Activated naive CD4-positive, alpha-beta T cell treated with anti-CD3 and anti-CD28 coated beads for 36 hours (primary cell): ENCODE measurements at regions of chr2 and their contacts with region 1.

Region 1: DNA sequence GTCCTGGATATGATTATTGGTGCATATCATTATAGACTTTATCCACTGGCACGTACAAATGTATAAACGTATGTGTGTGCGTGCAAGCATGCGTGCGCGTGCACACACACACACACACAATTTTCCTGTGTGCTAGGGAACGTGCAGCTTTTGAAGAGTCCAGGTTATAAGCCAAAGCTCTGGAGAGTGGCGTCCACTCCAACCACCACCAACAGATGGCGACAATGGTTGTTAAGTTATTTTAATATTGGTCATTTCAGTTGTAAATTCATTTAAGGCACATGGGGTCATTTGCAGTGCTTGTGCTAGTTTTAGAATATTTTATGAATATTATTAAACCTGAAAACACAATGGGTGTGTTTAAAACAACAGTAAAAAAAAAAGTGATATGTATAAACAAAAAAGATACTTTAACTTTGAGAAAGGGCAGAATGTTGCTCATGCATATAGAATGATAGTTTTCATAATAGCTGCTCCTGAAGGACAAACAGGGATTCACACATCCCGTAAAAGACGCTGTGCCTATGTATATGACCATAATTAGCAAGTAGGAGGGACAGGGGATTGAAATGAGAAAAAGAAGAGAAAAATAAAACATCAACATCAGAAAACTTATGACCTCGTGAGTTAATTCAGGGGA is 124.2 kb upstream of the ITGB6 start:
- DNase-seq: peak; percentile 69
- H3K4me3 Mint-ChIP-seq: no peak overlapping the region
- H3K27ac Mint-ChIP-seq: no peak overlapping the region
- H3K4me1 Mint-ChIP-seq: peaks cover 78% of the 10 kb centered on the region
- H3K27me3 Mint-ChIP-seq: no peaks in the 10 kb centered on the region

Region 2: GRCh38 chr2:160109936-160110673 is 214.2 kb before region 1 on chr2:
- CTCF ChIA-PET with region 1: interaction called, 14 read pairs
- intact Hi-C with region 1: loop called (anchors 2 kb)
- DNase-seq: peak; percentile 74
- H3K4me3 Mint-ChIP-seq: no peak overlapping the region
- H3K27ac Mint-ChIP-seq: no peak overlapping the region
- H3K4me1 Mint-ChIP-seq: no peaks in the 10 kb centered on the region
- H3K27me3 Mint-ChIP-seq: peaks cover 10% of the 10 kb centered on the region

Region 3: DNA sequence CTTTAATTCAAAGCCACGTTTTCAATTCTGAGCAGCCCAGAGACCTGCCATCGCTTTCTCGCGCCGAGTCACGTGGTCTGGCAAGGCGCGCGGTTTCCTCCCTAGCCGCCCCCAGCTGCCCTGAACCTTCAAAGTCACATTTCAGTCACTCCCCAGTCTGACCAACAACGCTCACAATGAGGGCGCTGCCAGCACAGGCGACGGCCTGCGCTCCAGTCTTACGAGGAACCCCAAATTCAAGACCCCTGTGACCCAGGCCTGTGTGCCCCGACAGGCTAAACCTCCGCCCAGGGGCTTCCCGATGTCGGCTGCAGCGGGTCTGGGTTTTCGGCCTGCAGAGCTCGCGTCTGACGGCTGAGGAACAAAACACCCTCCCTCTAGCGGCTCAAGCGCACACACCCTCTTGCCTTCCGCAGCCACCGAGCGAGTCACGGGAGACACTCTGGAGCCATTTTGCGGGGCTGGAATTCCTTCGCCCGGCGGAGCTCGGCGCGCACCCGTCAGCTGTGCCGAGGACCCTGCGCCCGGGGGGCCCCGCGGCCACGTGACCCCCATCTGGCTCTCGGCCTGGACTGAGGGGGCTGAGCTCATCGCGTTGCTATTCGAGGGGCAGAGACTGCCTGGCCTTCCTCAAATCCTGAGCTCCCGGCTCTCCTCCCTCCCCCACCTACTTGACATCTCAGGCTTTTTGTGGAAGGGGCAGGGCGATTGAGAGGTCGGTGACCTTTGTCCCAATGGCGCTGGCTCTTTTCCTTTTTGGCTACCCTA is 54.3 kb before region 1 on chr2:
- CTCF ChIA-PET with region 1: interaction called, 6 read pairs
- intact Hi-C with region 1: loop called (anchors 1 kb)
- DNase-seq: peak; percentile 64
- H3K4me3 Mint-ChIP-seq: peak overlapping the region; percentile 65
- H3K27ac Mint-ChIP-seq: peak overlapping the region; percentile 53
- H3K4me1 Mint-ChIP-seq: peaks cover 39% of the 10 kb centered on the region
- H3K27me3 Mint-ChIP-seq: no peaks in the 10 kb centered on the region

Region 4: GRCh38 chr2:160301420-160301819 is 22.9 kb before region 1 on chr2:
- CTCF ChIA-PET with region 1: interaction called, 5 read pairs
- intact Hi-C with region 1: loop called (anchors 1 kb)
- DNase-seq: peak; percentile 73
- H3K4me3 Mint-ChIP-seq: no peak overlapping the region
- H3K27ac Mint-ChIP-seq: peak overlapping the region; percentile 76
- H3K4me1 Mint-ChIP-seq: peaks cover 63% of the 10 kb centered on the region
- H3K27me3 Mint-ChIP-seq: no peaks in the 10 kb centered on the region

Region 5: DNA sequence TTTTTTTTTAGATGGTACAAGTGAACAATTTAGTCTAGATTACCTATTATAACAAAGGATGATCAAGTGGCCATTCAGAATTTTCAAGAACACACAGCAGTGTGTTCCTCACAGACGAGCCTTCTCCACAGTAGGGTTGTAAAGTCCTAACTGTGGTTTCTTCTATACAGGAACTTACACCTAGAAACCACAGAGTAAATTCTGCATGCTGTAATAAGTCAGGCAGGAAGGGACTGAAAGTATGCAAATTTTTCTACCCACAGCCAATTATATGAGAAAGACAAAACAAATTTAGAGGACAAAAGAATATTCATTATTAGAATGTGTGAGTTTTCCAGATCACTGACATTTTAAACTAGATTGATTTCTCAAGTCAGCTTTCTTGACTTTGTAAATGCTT is 69.9 kb after region 1 on chr2:
- CTCF ChIA-PET with region 1: interaction called, 8 read pairs
- intact Hi-C with region 1: loop called (anchors 1 kb)
- DNase-seq: no peak
- H3K4me3 Mint-ChIP-seq: peak overlapping the region; percentile 26
- H3K27ac Mint-ChIP-seq: peak overlapping the region; percentile 83
- H3K4me1 Mint-ChIP-seq: peaks cover 60% of the 10 kb centered on the region
- H3K27me3 Mint-ChIP-seq: no peaks in the 10 kb centered on the region

Region 6: DNA sequence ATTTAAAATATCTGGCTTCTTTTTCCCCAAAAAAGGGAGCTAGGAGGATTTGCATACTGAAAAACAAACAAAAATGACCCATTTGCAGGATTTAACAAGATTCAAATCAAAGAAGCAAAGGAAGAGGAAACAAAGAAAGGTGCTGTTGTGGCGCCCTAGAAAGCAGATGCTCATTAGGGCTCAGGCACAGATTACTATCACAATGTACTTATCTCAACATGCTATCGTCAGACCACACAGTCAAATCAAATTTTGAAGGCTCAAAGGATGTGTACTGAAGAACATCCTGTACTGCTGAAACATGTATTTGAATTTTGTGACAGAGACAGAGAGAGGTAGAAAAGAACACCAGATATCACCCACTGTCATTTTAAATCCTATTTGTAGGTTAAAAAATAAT is 158.4 kb after region 1 on chr2:
- CTCF ChIA-PET with region 1: no interaction called
- intact Hi-C with region 1: loop called (anchors 1 kb)
- DNase-seq: peak; percentile 46
- H3K4me3 Mint-ChIP-seq: peak overlapping the region; percentile 47
- H3K27ac Mint-ChIP-seq: peak overlapping the region; percentile 85
- H3K4me1 Mint-ChIP-seq: peaks cover 71% of the 10 kb centered on the region
- H3K27me3 Mint-ChIP-seq: no peaks in the 10 kb centered on the region

Region 7: GRCh38 chr2:160970052-160970965 is 646.0 kb after region 1 on chr2:
- CTCF ChIA-PET with region 1: interaction called, 7 read pairs
- intact Hi-C with region 1: loop called (anchors 2 kb)
- DNase-seq: peak; percentile 29
- H3K4me3 Mint-ChIP-seq: no peak overlapping the region
- H3K27ac Mint-ChIP-seq: no peak overlapping the region
- H3K4me1 Mint-ChIP-seq: peaks cover 8% of the 10 kb centered on the region
- H3K27me3 Mint-ChIP-seq: no peaks in the 10 kb centered on the region